ENCODE measurements at regions of chr2 and their contacts with region 1.

Region 1: GRCh38 chr2:173402405-173402974 is 47.8 kb downstream of the CDCA7 start:
- DNase-seq: peak; percentile 65 to 85
- ATAC-seq: peak; percentile 94 to 98 (median 95)
- H3K4me3 ChIP-seq: peak overlapping the region in 7 of 10 donors; percentile 16 to 45 (median 32)
- H3K27ac ChIP-seq: peak overlapping the region in 3 of 10 donors; percentile 6 to 26 (median 19)
- H3K4me1 ChIP-seq: peaks cover 0 to 14% (median 0%) of the 10 kb centered on the region in 9 donors
- H3K27me3 ChIP-seq: peaks cover 0 to 82% (median 28%) of the 10 kb centered on the region in 7 donors
- CTCF ChIP-seq: peak; percentile 67 to 93 (median 83)

Region 2: DNA sequence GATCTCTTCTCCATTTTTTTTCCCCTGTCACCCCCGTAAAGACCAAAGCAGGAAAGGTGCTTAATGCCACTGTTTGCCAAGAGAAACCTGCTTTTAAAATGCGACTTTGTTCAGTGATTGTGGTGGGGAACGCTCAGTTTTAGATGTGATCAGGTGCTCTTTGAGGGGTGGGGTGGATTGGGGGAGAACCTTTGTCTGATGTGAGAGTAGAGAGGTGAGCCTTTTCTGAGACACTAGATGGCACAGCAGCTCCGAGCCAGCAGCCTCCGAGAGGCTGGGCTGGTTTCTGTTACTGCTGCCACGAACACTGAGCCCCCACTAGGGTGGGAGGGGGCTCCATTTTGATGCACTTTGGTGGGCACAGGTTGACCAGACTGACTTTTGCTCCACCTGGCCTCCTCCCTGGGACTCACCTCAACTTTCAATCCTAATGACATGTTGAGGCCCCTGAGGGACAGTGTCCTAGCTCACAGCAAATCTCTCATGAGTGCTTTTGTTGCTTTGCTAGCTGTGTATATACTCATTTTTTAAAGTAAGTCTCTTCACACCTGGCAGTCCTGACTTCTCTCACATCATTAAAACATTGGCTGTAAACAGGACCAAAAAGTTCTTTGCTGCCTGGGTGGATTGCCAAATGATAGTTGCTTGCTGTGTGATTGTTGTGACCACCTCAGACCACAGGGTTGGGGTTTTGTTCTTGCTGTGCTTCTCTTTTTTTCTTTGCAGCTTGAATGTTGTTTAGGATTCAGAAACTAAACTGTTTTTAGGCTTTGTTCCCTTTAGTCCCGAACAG is 425.0 kb before region 1 on chr2:
- intact Hi-C with region 1: loop called in 1 of 10 experiments (anchors 5 kb)
- DNase-seq: no peak
- ATAC-seq: peak in 7 of 8 donors; percentile 51 to 77 (median 65)
- H3K4me3 ChIP-seq: no peak overlapping the region
- H3K27ac ChIP-seq: no peak overlapping the region
- H3K4me1 ChIP-seq: peaks cover 0 to 12% (median 6%) of the 10 kb centered on the region in 9 donors
- H3K27me3 ChIP-seq: no peaks in the 10 kb centered on the region
- CTCF ChIP-seq: peak in 7 of 9 donors; percentile 14 to 58 (median 40)

Region 3: DNA sequence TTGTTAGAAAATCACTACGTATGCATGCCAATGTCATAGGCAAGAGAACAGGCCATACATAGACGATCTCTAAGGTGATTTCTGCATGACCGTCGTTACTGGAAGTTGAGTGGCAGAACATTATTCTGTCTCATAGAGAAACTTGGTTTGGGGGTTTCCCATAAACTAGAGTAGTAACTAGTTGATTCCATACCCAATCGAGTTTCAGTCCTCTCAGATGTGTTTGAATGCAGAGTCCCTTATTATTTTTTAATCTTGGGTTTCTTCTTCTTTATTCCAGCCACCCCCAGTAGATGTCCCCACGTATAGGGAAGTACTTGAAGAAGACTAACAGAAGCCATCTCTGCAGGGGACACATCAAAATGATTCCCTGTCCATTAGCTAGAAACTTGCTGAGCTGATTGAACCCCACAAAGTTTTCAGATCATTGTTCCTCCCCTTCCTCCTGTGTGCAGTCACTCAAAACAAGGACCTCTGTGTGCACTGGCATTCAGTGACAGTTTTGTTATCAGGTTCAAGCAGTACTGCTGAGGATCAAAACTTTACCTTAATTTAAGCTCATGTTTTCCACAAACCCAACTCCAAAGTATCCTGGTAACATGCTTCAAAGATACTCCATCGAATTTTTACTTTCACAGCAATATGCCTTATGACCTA is 116.2 kb before region 1 on chr2:
- intact Hi-C with region 1: no loop called
- DNase-seq: no peak
- ATAC-seq: no peak
- H3K4me3 ChIP-seq: no peak overlapping the region
- H3K27ac ChIP-seq: no peak overlapping the region
- H3K4me1 ChIP-seq: no peaks in the 10 kb centered on the region
- H3K27me3 ChIP-seq: peaks cover 0 to 6% (median 0%) of the 10 kb centered on the region in 7 donors
- CTCF ChIP-seq: no peak

Region 4: GRCh38 chr2:173448938-173449471 is 46.5 kb after region 1 on chr2:
- intact Hi-C with region 1: loop called (anchors 1 to 5 kb)
- DNase-seq: peak; percentile 80 to 82
- ATAC-seq: peak; percentile 88 to 97 (median 94)
- H3K4me3 ChIP-seq: peak overlapping the region in 7 of 10 donors; percentile 15 to 44 (median 38)
- H3K27ac ChIP-seq: peak overlapping the region in 8 of 10 donors; percentile 5 to 73 (median 69)
- H3K4me1 ChIP-seq: peaks cover 0 to 11% (median 2%) of the 10 kb centered on the region in 9 donors
- H3K27me3 ChIP-seq: peaks cover 0 to 8% (median 0%) of the 10 kb centered on the region in 7 donors
- CTCF ChIP-seq: peak; percentile 65 to 84 (median 75)

Region 5: GRCh38 chr2:173571021-173571882 is 168.8 kb after region 1 on chr2:
- intact Hi-C with region 1: loop called in 5 of 10 experiments (anchors 5 to 10 kb)
- DNase-seq: no peak
- ATAC-seq: peak in 4 of 8 donors; percentile 35 to 69 (median 41)
- H3K4me3 ChIP-seq: peak overlapping the region in 1 of 10 donors; percentile 3
- H3K27ac ChIP-seq: no peak overlapping the region
- H3K4me1 ChIP-seq: peaks cover 0 to 16% (median 6%) of the 10 kb centered on the region in 9 donors
- H3K27me3 ChIP-seq: peaks cover 0 to 14% (median 0%) of the 10 kb centered on the region in 7 donors
- CTCF ChIP-seq: peak in 7 of 9 donors; percentile 6 to 55 (median 49)

Region 6: GRCh38 chr2:173752152-173752551 is 349.7 kb after region 1 on chr2:
- intact Hi-C with region 1: loop called in 1 of 10 experiments (anchors 5 kb)
- DNase-seq: no peak
- ATAC-seq: no peak
- H3K4me3 ChIP-seq: no peak overlapping the region
- H3K27ac ChIP-seq: no peak overlapping the region
- H3K4me1 ChIP-seq: peaks cover 0 to 15% (median 7%) of the 10 kb centered on the region in 9 donors
- H3K27me3 ChIP-seq: peaks cover 0 to 9% (median 0%) of the 10 kb centered on the region in 7 donors
- CTCF ChIP-seq: peak in 3 of 9 donors; percentile 14 to 30 (median 21)

Region 7: DNA sequence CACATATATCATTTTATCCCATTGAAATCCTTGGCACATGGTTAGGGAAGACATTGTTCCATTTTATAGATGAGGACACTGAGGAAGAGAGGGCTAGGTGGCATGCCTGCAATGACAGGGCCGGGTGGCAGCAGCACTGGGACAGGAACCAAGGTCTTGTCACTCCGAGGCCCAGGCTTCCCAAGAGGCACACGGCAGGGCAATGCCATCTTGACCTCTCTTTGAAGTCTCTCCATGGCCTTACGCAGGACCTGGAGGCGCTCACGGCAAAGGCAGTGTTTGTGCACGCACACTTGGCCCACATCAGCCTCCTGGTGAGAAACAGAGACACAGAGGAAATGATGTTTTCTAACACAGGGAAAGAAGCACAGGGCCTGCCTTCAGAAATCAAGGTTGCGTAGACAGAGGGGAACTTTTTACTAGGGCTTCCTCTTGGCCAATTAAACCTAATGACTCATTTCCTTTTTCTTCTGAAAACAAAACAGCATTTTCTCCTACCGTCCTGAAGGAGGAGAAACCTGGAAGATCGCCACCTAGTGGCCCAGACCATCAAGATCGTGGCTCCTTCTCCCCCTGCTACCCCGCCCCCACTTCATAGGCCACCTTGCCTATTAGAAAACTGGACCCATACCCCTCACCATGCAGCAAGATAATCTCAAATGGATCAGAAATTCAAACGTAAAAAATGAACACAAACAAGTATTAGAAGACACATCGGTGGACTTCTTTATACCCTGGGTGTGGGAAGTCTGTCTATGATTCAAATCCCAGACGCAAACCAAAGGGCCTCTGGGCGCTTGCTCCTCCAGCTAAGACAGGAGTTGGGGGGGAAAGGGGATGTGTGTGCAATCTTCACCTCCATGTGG is 637.3 kb after region 1 on chr2:
- intact Hi-C with region 1: loop called in 1 of 10 experiments (anchors 10 kb)
- DNase-seq: peak; percentile 82 to 92
- ATAC-seq: peak; percentile 84 to 95 (median 88)
- H3K4me3 ChIP-seq: peak overlapping the region in 5 of 10 donors; percentile 7 to 29 (median 23)
- H3K27ac ChIP-seq: peak overlapping the region; percentile 68 to 95 (median 83)
- H3K4me1 ChIP-seq: peaks cover 10 to 63% (median 41%) of the 10 kb centered on the region in 9 donors
- H3K27me3 ChIP-seq: no peaks in the 10 kb centered on the region
- CTCF ChIP-seq: peak; percentile 79 to 96 (median 89)

Region 8: GRCh38 chr2:174341286-174341994 is 939.0 kb after region 1 on chr2:
- intact Hi-C with region 1: loop called (anchors 1 to 10 kb)
- DNase-seq: peak; percentile 83 to 90
- ATAC-seq: peak; percentile 82 to 98 (median 91)
- H3K4me3 ChIP-seq: peak overlapping the region in 3 of 10 donors; percentile 1 to 20 (median 2)
- H3K27ac ChIP-seq: no peak overlapping the region
- H3K4me1 ChIP-seq: peaks cover 23 to 69% (median 34%) of the 10 kb centered on the region in 9 donors
- H3K27me3 ChIP-seq: peaks cover 45 to 100% (median 88%) of the 10 kb centered on the region in 7 donors
- CTCF ChIP-seq: peak; percentile 84 to 99 (median 98)

Measured in heart right ventricle (tissue), 16 donors.